T-cell (primary cell): ENCODE measurements at regions of chr20 and their contacts with region 1.

Region 1: GRCh38 chr20:38085026-38085425 is 51.5 kb downstream of the RPRD1B start:
- DNase-seq: no peak
- ATAC-seq: no peak
- H3K4me3 ChIP-seq: no peak overlapping the region
- H3K4me3 Mint-ChIP-seq: no peak overlapping the region
- H3K27ac ChIP-seq: no peak overlapping the region
- H3K27ac Mint-ChIP-seq: no peak overlapping the region
- H3K4me1 ChIP-seq: no peaks in the 10 kb centered on the region
- H3K4me1 Mint-ChIP-seq: peaks cover 15 to 21% (median 17%) of the 10 kb centered on the region in 3 donors
- H3K27me3 ChIP-seq: no peaks in the 10 kb centered on the region
- H3K27me3 Mint-ChIP-seq: no peaks in the 10 kb centered on the region

Region 2: DNA sequence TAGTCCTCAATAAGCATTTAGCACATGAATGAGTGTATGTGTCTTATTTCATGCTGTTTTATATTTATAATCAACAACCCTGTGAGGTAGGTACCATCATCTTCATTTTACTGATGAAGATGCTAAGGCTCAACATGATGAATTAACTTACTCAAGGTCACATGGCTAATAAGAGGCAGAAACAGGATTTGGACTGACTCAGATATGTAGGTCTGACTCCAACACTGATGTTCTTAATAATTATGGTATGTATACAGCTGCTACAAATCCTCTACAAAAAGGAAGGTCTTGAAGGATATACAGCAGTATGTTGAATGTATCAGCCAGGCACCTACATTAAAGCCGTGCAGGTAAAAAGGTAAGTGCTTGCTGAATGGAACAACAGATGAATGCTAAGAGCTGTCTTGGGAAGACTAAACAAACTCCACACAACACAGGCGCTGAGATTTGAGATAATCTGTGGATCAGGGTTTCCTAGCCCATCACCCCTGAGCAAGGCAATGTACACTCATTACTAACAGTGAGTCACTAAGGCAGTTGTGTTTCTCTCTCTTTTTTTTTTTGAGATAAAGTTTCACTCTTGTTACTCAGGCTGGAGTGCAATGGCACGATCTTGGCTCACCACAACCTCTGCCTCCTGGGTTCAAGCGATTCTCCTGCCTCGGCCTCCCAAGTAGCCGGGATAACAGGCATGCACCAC is 83.7 kb before region 1 on chr20:
- CTCF ChIA-PET with region 1: no interaction called
- POLR2A ChIA-PET with region 1: no interaction called
- DNase-seq: no peak
- ATAC-seq: no peak
- H3K4me3 ChIP-seq: no peak overlapping the region
- H3K4me3 Mint-ChIP-seq: no peak overlapping the region
- H3K27ac ChIP-seq: no peak overlapping the region
- H3K27ac Mint-ChIP-seq: peak overlapping the region in 1 of 2 donors; percentile 45
- H3K4me1 ChIP-seq: no peaks in the 10 kb centered on the region
- H3K4me1 Mint-ChIP-seq: peaks cover 6 to 13% (median 11%) of the 10 kb centered on the region in 3 donors
- H3K27me3 ChIP-seq: no peaks in the 10 kb centered on the region
- H3K27me3 Mint-ChIP-seq: no peaks in the 10 kb centered on the region

Region 3: GRCh38 chr20:38073307-38074071 is 11.5 kb before region 1 on chr20:
- CTCF ChIA-PET with region 1: interaction called in 1 of 2 experiments, 5 read pairs
- POLR2A ChIA-PET with region 1: interaction called in 1 of 2 experiments, 10 read pairs
- DNase-seq: peak in 7 of 35 experiments; percentile 5 to 59 (median 16)
- ATAC-seq: peak; percentile 36 to 52 (median 48)
- H3K4me3 ChIP-seq: no peak overlapping the region
- H3K4me3 Mint-ChIP-seq: no peak overlapping the region
- H3K27ac ChIP-seq: no peak overlapping the region
- H3K27ac Mint-ChIP-seq: peak overlapping the region in 1 of 2 donors; percentile 9
- H3K4me1 ChIP-seq: no peaks in the 10 kb centered on the region
- H3K4me1 Mint-ChIP-seq: peaks cover 10 to 24% (median 24%) of the 10 kb centered on the region in 3 donors
- H3K27me3 ChIP-seq: no peaks in the 10 kb centered on the region
- H3K27me3 Mint-ChIP-seq: no peaks in the 10 kb centered on the region

Region 4: DNA sequence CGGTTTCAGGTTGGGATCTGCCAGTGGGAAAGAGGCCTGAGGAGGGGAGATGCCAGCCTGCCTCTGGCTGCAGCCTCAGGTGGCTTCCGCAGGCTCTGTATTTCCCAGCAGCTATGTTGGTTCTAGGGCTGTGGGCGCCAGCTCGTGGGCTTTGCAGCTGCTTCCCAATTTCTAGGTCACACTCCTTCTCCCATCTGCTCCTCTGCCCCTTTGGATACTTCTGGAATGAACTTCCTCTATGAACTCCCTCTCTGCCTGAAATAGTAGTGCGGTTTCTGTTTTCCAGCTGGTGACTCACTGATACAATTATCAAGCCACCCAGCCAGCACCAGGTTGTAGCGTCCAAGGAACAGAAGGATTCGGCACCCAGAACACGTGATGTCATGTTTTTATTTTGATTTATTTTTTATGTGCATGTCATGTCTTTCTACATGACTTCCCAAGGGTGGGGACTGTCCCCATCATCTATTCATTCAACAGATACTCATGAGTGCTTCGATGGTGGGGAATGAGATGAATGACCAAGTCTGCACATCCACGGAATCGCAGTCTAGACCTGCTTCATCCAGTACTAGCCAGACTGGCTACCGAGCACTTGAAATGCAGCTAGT is 42.1 kb after region 1 on chr20:
- CTCF ChIA-PET with region 1: no interaction called
- POLR2A ChIA-PET with region 1: no interaction called
- DNase-seq: no peak
- ATAC-seq: no peak
- H3K4me3 ChIP-seq: no peak overlapping the region
- H3K4me3 Mint-ChIP-seq: no peak overlapping the region
- H3K27ac ChIP-seq: no peak overlapping the region
- H3K27ac Mint-ChIP-seq: no peak overlapping the region
- H3K4me1 ChIP-seq: no peaks in the 10 kb centered on the region
- H3K4me1 Mint-ChIP-seq: peaks cover 0 to 6% (median 0%) of the 10 kb centered on the region in 3 donors
- H3K27me3 ChIP-seq: no peaks in the 10 kb centered on the region
- H3K27me3 Mint-ChIP-seq: no peaks in the 10 kb centered on the region